IMR-90 (cell line): ENCODE measurements at regions of chr11 and their contacts with region 1.

Region 1: GRCh38 chr11:61627567-61628445 is 46.9 kb upstream of the SYT7 start:
- DNase-seq: peak; percentile 73
- ATAC-seq: peak; percentile 97
- H3K4me3 ChIP-seq: no peak overlapping the region
- H3K27ac ChIP-seq: no peak overlapping the region
- H3K4me1 ChIP-seq: no peaks in the 10 kb centered on the region
- H3K27me3 ChIP-seq: peaks cover 11% of the 10 kb centered on the region
- CTCF ChIP-seq: peak; percentile 92
- POLR2A ChIP-seq: 0 out of 2 replicates have a peak, but pooled peaks have one; percentile 32
- RAD21 ChIP-seq: peak; percentile 94

Region 2: DNA sequence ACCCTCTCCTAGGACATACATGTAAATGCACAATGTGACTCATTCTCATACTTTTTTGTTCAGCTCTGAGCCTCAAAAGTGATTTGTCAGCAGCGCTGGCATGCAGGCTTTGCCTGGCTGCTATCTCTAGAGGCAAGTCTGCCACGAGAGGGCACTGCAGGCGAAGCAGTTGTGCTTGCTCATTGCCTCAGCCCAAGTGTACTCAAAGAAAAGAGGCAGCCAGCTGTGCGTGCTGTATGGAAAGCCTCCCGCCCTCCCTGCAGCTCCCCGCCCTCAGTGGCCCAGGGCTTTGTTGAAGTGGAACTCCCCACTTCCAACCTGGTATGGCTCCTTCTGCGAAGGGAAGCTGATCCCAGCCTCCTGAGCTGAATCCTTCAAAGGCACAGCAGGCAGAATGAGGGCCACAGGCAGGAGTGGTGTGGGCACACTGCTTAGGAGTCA is 181.6 kb before region 1 on chr11:
- CTCF ChIA-PET with region 1: interaction called, 4 read pairs
- POLR2A ChIA-PET with region 1: no interaction called
- dilution Hi-C with region 1: no loop called
- in situ Hi-C with region 1: no loop called
- intact Hi-C with region 1: loop called (anchors 1 kb)
- DNase-seq: peak; percentile 97
- ATAC-seq: peak; percentile 97
- H3K4me3 ChIP-seq: no peak overlapping the region
- H3K27ac ChIP-seq: peak overlapping the region; percentile 71
- H3K4me1 ChIP-seq: peaks cover 8% of the 10 kb centered on the region
- H3K27me3 ChIP-seq: no peaks in the 10 kb centered on the region
- CTCF ChIP-seq: peak; percentile 97
- POLR2A ChIP-seq: no peak
- RAD21 ChIP-seq: peak; percentile 92

Region 3: GRCh38 chr11:61477727-61478148 is 150.1 kb before region 1 on chr11:
- CTCF ChIA-PET with region 1: no interaction called
- POLR2A ChIA-PET with region 1: no interaction called
- dilution Hi-C with region 1: no loop called
- in situ Hi-C with region 1: no loop called
- intact Hi-C with region 1: loop called (anchors 1 kb)
- DNase-seq: no peak
- ATAC-seq: peak; percentile 75
- H3K4me3 ChIP-seq: no peak overlapping the region
- H3K27ac ChIP-seq: no peak overlapping the region
- H3K4me1 ChIP-seq: no peaks in the 10 kb centered on the region
- H3K27me3 ChIP-seq: peaks cover 15% of the 10 kb centered on the region; the same call in 1 of the 2 replicates
- CTCF ChIP-seq: peak; percentile 79
- POLR2A ChIP-seq: 0 out of 2 replicates have a peak, but pooled peaks have one; percentile 21
- RAD21 ChIP-seq: peak; percentile 84

Region 4: GRCh38 chr11:61516675-61517572 is 110.9 kb before region 1 on chr11:
- CTCF ChIA-PET with region 1: interaction called, 3 read pairs
- POLR2A ChIA-PET with region 1: no interaction called
- dilution Hi-C with region 1: no loop called
- in situ Hi-C with region 1: no loop called
- intact Hi-C with region 1: loop called (anchors 5 kb)
- DNase-seq: no peak
- ATAC-seq: peak; percentile 83
- H3K4me3 ChIP-seq: no peak overlapping the region
- H3K27ac ChIP-seq: no peak overlapping the region
- H3K4me1 ChIP-seq: no peaks in the 10 kb centered on the region
- H3K27me3 ChIP-seq: peaks cover 28% of the 10 kb centered on the region
- CTCF ChIP-seq: peak; percentile 84
- POLR2A ChIP-seq: no peak
- RAD21 ChIP-seq: peak; percentile 84

Region 5: GRCh38 chr11:61532139-61533038 is 95.4 kb before region 1 on chr11:
- CTCF ChIA-PET with region 1: no interaction called
- POLR2A ChIA-PET with region 1: no interaction called
- dilution Hi-C with region 1: no loop called
- in situ Hi-C with region 1: no loop called
- intact Hi-C with region 1: loop called (anchors 5 kb)
- DNase-seq: no peak
- ATAC-seq: no peak
- H3K4me3 ChIP-seq: no peak overlapping the region
- H3K27ac ChIP-seq: no peak overlapping the region
- H3K4me1 ChIP-seq: no peaks in the 10 kb centered on the region
- H3K27me3 ChIP-seq: peaks cover 77% of the 10 kb centered on the region
- CTCF ChIP-seq: peak; percentile 61
- POLR2A ChIP-seq: no peak
- RAD21 ChIP-seq: peak; percentile 51

Region 6: GRCh38 chr11:61555051-61555969 is 72.5 kb before region 1 on chr11:
- CTCF ChIA-PET with region 1: no interaction called
- POLR2A ChIA-PET with region 1: no interaction called
- dilution Hi-C with region 1: no loop called
- in situ Hi-C with region 1: no loop called
- intact Hi-C with region 1: no loop called
- DNase-seq: no peak
- ATAC-seq: no peak; the same call in 1 of the 2 replicates
- H3K4me3 ChIP-seq: no peak overlapping the region
- H3K27ac ChIP-seq: no peak overlapping the region
- H3K4me1 ChIP-seq: peaks cover 2% of the 10 kb centered on the region; the same call in 1 of the 2 replicates
- H3K27me3 ChIP-seq: peaks cover 70% of the 10 kb centered on the region
- CTCF ChIP-seq: peak; percentile 25; the same call in 1 of the 2 replicates
- POLR2A ChIP-seq: no peak
- RAD21 ChIP-seq: no peak

Region 7: GRCh38 chr11:61587521-61588453 is 40.0 kb before region 1 on chr11:
- CTCF ChIA-PET with region 1: no interaction called
- POLR2A ChIA-PET with region 1: no interaction called
- dilution Hi-C with region 1: no loop called
- in situ Hi-C with region 1: loop called (anchors 5 kb)
- intact Hi-C with region 1: no loop called
- DNase-seq: no peak
- ATAC-seq: peak; percentile 89
- H3K4me3 ChIP-seq: peak overlapping the region; percentile 17; the same call in 1 of the 2 replicates
- H3K27ac ChIP-seq: no peak overlapping the region
- H3K4me1 ChIP-seq: peaks cover 2% of the 10 kb centered on the region; the same call in 1 of the 2 replicates
- H3K27me3 ChIP-seq: peaks cover 71% of the 10 kb centered on the region
- CTCF ChIP-seq: 0 out of 2 replicates have a peak, but pooled peaks have one; percentile 7
- POLR2A ChIP-seq: no peak
- RAD21 ChIP-seq: no peak

Region 8: GRCh38 chr11:61639816-61640443 is 12.1 kb after region 1 on chr11:
- CTCF ChIA-PET with region 1: interaction called, 17 read pairs
- POLR2A ChIA-PET with region 1: no interaction called
- dilution Hi-C with region 1: no loop called
- in situ Hi-C with region 1: no loop called
- intact Hi-C with region 1: no loop called
- DNase-seq: peak; percentile 31
- ATAC-seq: peak; percentile 59
- H3K4me3 ChIP-seq: no peak overlapping the region
- H3K27ac ChIP-seq: peak overlapping the region; percentile 59; the same call in 1 of the 2 replicates
- H3K4me1 ChIP-seq: peaks cover 7% of the 10 kb centered on the region; the same call in 1 of the 2 replicates
- H3K27me3 ChIP-seq: peaks cover 16% of the 10 kb centered on the region
- CTCF ChIP-seq: no peak
- POLR2A ChIP-seq: no peak
- RAD21 ChIP-seq: no peak

Region 9: DNA sequence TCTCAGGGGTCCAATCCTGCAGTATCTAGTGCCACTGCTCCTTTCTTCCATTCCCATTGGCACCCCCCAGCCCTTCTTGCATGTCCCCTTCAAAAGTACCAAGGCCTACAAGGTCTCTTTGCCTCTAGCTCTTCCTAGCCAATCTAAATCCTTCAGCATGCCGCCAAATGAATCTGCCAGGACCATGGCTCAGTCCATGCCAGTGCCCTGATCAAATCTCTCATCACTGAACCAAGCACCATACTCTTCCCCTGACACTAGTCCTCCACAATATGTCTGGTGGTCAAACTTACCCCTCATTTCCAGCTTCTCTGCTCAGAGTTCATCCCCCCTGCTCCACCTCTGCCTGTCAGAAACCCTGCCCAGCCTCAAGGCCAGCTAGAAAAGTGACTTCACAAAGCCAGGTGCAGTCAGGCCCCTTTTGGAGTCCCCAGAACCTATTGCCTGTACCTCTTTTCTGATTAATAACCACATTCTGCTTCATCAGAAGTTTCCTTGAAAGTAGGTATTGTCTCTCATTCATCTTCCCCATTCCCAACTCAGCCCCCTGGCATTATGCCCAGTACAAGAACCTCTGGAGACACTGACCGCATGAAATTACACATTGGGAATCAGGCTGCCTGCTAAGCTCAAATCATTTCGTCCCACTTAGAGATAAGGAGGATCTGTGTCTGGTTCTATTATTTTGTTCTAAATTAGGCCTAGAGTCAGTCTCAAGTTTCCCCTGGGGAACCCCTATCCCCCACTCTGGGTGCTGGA is 176.3 kb after region 1 on chr11:
- CTCF ChIA-PET with region 1: no interaction called
- POLR2A ChIA-PET with region 1: no interaction called
- dilution Hi-C with region 1: no loop called
- in situ Hi-C with region 1: no loop called
- intact Hi-C with region 1: no loop called
- DNase-seq: peak; percentile 49
- ATAC-seq: no peak
- H3K4me3 ChIP-seq: no peak overlapping the region
- H3K27ac ChIP-seq: no peak overlapping the region
- H3K4me1 ChIP-seq: peaks cover 3% of the 10 kb centered on the region
- H3K27me3 ChIP-seq: no peaks in the 10 kb centered on the region
- CTCF ChIP-seq: no peak
- POLR2A ChIP-seq: no peak
- RAD21 ChIP-seq: no peak